HepG2 (cell line): ENCODE measurements at regions of chr7 and their contacts with region 1.

Region 1: DNA sequence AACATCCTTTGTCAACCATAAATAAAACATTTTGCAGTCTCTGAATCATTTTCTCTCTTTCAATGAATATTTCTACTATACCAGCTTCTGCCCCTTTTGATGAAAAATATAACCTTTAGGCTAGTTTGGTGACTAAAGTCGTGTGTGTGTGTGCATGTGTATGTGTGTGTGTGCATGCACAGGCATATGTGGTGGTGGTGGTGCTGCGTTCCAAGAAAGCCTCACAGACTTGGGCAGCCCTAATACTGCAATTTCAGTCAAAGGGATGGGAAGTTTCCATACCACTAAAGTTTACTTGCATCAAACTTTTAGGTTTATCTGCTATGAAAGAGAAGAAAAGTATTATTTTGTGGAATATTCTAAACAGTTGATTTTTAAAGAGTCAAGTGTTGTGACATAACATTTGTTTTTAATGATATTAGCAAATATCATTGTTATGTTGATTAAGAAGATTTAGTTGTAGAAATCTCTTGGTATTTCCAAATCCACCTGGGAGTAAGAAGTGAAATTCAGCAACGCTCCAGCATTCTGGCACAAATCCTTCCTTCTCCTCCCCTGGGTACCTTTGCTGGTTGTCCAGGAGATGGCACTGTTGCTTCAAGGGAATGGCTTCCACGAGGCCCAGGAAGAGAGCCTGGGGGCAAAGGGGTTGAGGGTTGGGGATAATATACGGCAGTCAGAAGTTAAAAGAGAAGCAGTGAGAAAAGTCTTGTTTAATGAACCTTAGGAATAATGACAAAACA is 41.5 kb downstream of the ASB4 start:
- DNase-seq: peak; percentile 58
- ATAC-seq: peak; percentile 97
- H3K4me3 ChIP-seq: no peak overlapping the region
- H3K27ac ChIP-seq: no peak overlapping the region
- H3K4me1 ChIP-seq: peaks cover 26% of the 10 kb centered on the region
- H3K27me3 ChIP-seq: no peaks in the 10 kb centered on the region
- CTCF ChIP-seq: peak; percentile 90
- EP300 ChIP-seq: no peak
- POLR2A ChIP-seq: no peak
- RAD21 ChIP-seq: peak; percentile 78

Region 2: GRCh38 chr7:95491634-95492320 is 35.4 kb before region 1 on chr7:
- CTCF ChIA-PET with region 1: no interaction called
- POLR2A ChIA-PET with region 1: no interaction called
- in situ Hi-C with region 1: no loop called
- intact Hi-C with region 1: no loop called
- DNase-seq: peak; percentile 58
- ATAC-seq: peak; percentile 20; the same call in 1 of the 3 replicates
- H3K4me3 ChIP-seq: no peak overlapping the region
- H3K27ac ChIP-seq: no peak overlapping the region
- H3K4me1 ChIP-seq: peaks cover 77% of the 10 kb centered on the region
- H3K27me3 ChIP-seq: no peaks in the 10 kb centered on the region
- CTCF ChIP-seq: no peak
- EP300 ChIP-seq: no peak
- POLR2A ChIP-seq: no peak
- RAD21 ChIP-seq: no peak

Region 3: GRCh38 chr7:95511716-95512260 is 15.4 kb before region 1 on chr7:
- CTCF ChIA-PET with region 1: interaction called, 10 read pairs
- POLR2A ChIA-PET with region 1: no interaction called
- in situ Hi-C with region 1: no loop called
- intact Hi-C with region 1: loop called (anchors 2 kb)
- DNase-seq: peak; percentile 75
- ATAC-seq: peak; percentile 97
- H3K4me3 ChIP-seq: no peak overlapping the region; a peak in 1 of 6 replicates
- H3K27ac ChIP-seq: no peak overlapping the region
- H3K4me1 ChIP-seq: peaks cover 10% of the 10 kb centered on the region; the same call in 1 of the 2 replicates
- H3K27me3 ChIP-seq: no peaks in the 10 kb centered on the region
- CTCF ChIP-seq: peak; percentile 82
- EP300 ChIP-seq: no peak
- POLR2A ChIP-seq: no peak
- RAD21 ChIP-seq: peak; percentile 73

Region 4: DNA sequence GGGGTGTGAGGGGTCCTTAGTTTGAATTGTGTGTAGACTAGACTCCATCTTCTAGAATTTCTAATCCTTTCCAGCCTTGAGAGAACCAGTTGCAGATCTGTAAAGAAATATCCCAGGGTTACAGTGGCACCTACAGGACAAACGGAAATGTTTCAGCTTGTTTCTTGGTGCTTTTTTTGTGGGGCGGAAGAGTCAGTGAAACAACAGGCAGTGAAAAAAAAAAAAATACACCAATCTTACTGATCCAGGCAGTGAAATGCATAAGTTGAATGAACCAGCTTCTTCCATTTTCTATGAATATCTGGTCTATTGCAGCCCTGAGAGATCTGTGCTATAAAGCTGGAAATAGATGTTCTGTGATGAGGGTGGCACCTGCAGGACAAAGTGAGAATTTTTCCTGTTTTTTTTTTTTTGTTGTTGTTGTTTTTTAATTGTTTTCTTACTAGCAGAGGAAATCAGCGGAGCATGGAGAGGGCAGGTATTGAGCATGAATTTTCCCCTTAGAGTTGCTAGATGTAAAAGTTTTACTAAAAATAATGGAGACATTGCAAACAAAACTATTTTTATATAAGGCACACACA is 163.3 kb after region 1 on chr7:
- CTCF ChIA-PET with region 1: interaction called, 150 read pairs
- POLR2A ChIA-PET with region 1: no interaction called
- in situ Hi-C with region 1: loop called (anchors 5 kb)
- intact Hi-C with region 1: loop called (anchors 1 kb)
- DNase-seq: peak; percentile 47
- ATAC-seq: peak; percentile 83
- H3K4me3 ChIP-seq: no peak overlapping the region
- H3K27ac ChIP-seq: no peak overlapping the region
- H3K4me1 ChIP-seq: no peaks in the 10 kb centered on the region
- H3K27me3 ChIP-seq: no peaks in the 10 kb centered on the region
- CTCF ChIP-seq: peak; percentile 72
- EP300 ChIP-seq: no peak
- POLR2A ChIP-seq: no peak
- RAD21 ChIP-seq: peak; percentile 25; the same call in 1 of the 2 replicates

Region 5: DNA sequence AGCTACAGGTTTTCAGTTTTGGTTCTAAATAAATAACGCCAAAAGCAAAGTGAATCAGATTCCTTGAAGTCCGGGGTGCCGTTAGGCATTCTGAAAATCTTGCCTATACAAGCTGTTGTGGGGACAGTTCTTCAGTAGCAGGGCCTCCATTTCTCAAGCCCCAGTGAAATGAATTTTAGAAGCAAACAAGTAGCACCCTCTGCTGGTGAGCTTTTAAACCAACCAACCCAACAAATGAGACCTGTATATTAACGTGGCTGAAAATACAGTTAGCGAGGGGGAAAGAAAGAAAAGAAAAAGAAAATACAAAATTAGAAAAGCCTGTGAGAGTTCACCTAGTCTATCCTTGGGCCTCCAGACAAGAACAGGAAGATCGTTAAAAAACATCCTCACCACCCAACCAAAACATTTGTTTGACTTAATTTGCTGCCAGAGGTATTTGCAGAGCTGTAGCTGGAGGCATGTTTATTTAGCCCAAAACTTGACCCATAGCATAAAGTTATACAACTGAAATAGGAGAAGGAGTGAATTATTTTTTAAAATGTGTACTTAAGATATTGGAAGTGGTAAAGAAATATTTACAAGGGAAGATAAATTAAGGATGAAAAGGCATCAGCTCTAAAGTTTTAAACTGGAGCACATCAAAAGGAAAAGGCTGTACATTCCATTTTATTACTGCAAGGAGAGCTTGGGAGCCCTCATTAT is 344.0 kb after region 1 on chr7:
- CTCF ChIA-PET with region 1: no interaction called
- POLR2A ChIA-PET with region 1: no interaction called
- in situ Hi-C with region 1: loop called (anchors 25 kb)
- intact Hi-C with region 1: no loop called
- DNase-seq: peak; percentile 43
- ATAC-seq: peak; percentile 71
- H3K4me3 ChIP-seq: no peak overlapping the region
- H3K27ac ChIP-seq: no peak overlapping the region
- H3K4me1 ChIP-seq: no peaks in the 10 kb centered on the region
- H3K27me3 ChIP-seq: no peaks in the 10 kb centered on the region
- CTCF ChIP-seq: peak; percentile 68
- EP300 ChIP-seq: no peak
- POLR2A ChIP-seq: no peak
- RAD21 ChIP-seq: peak; percentile 37; the same call in 1 of the 2 replicates